Left ventricle myocardium superior (tissue), 1 donor: ENCODE measurements at regions of chr12 and their contacts with region 1.

Region 1: GRCh38 chr12:10562306-10562933 is 51.0 kb downstream of the MAGOHB start:
- DNase-seq: no peak
- ATAC-seq: no peak

Region 2: DNA sequence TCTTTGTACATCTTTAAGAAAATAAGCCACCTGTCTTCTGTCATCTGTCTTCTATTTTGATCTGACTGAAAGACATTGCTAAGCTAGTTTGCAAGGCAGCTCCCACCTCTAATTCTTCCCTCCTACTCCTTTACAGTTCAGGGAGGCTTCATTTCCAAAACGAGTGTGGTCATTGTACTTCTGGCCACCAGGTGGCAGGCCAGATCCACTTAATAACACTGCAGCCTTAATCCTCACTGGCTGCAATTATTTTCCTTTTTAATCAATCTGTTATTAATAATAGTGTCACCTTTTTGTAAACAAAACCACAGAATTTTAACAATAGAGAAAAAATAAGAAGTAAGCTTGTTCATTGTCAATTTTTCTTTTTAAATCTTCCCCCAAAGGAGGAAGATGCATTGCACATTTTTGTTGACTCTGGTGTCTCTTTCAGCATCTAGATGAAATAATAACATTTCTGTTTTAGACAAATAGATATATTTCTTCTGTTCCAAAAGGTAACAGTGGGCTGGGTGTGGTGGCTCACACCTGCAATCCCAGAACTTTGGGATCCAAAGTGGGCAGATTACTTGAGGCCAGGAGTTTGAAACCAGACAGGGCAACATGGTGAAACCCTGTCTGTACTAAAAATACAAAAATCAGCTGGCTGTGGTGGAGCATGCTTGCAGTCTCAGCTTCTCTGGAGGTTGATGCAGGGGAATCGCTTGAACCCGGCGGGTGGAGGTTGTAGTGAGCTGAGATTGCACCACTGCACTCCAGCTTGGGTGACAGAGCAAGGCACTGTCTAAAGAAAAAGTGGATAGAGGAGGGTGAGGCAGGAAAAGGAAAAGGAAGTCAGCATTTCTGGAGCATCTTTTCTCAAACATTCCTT is 326.4 kb before region 1 on chr12:
- intact Hi-C with region 1: loop called (anchors 2 kb)
- DNase-seq: peak; percentile 44
- ATAC-seq: peak; percentile 80

Region 3: GRCh38 chr12:10331642-10332239 is 230.7 kb before region 1 on chr12:
- intact Hi-C with region 1: loop called (anchors 2 kb)
- DNase-seq: no peak
- ATAC-seq: peak; percentile 55

Region 4: GRCh38 chr12:10409387-10409786 is 153.0 kb before region 1 on chr12 and contains the start of gene KLRC4:
- intact Hi-C with region 1: no loop called
- DNase-seq: no peak
- ATAC-seq: no peak
- total RNA-seq, gene KLRC4: not detected